ENCODE measurements at regions of chr11 and their contacts with region 1.

Region 1: DNA sequence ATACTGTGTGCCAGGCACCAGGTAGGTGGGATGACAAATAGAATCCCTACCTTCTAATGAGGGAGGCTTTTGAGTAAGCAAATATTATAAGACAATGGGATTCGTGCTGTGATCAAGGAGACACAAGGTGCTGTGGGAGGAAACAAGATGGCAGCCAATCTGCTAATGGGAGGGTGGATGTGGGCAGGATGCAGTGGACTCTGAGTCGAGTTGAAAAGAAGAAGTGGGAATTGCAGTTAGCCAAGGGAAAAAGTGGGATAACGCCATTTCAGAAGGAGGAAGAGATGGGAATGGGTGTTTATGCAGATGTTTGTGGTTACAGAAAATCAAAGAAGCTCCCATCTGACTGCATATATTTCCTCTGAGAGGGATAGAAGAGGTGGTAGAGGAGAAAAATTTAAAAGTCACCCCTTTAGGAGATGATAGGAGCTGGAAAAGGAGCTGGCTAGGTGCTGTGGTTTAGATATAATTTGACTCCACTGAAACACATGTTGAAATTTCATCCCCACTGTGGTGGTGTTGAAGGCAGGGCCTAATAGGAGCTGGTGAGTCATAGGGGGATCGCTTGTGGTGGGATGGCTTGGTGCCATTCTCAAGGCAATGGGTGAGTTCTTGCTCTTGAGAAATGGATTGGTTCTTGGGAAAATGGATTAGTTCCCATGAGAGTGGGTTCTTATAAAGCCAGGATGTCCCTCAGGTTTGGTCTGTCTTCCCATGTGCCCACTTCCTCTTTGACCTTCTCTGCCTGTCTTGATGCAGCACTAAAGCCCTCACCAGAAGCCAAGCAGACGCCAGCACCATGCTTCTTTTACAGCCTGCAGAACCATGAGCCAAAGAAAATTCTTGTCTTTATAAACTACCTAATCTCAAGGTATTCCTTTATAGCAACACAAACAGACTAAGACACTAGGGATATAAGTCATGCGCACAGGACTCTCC is 30.0 kb upstream of the POU2AF1 start:
- DNase-seq: no peak
- H3K4me3 ChIP-seq: no peak overlapping the region
- H3K27ac ChIP-seq: no peak overlapping the region
- H3K4me1 ChIP-seq: no peaks in the 10 kb centered on the region
- H3K27me3 ChIP-seq: no peaks in the 10 kb centered on the region; the same call in 1 of the 2 replicates
- CTCF ChIP-seq: no peak
- EP300 ChIP-seq: no peak
- RAD21 ChIP-seq: no peak

Region 2: GRCh38 chr11:111422494-111423249 is 13.6 kb after region 1 on chr11:
- CTCF ChIA-PET with region 1: interaction called, 26 read pairs
- POLR2A ChIA-PET with region 1: no interaction called
- DNase-seq: peak; percentile 64
- H3K4me3 ChIP-seq: peak overlapping the region in 1 of 2 experiments; percentile 26; a peak in 1 of 4 replicates
- H3K27ac ChIP-seq: no peak overlapping the region
- H3K4me1 ChIP-seq: peaks cover 0 to 6% of the 10 kb centered on the region in 2 experiments; a peak in 1 of 4 replicates
- H3K27me3 ChIP-seq: no peaks in the 10 kb centered on the region; the same call in 1 of the 2 replicates
- CTCF ChIP-seq: peak; percentile 68
- EP300 ChIP-seq: no peak
- RAD21 ChIP-seq: peak; percentile 91

Region 3: DNA sequence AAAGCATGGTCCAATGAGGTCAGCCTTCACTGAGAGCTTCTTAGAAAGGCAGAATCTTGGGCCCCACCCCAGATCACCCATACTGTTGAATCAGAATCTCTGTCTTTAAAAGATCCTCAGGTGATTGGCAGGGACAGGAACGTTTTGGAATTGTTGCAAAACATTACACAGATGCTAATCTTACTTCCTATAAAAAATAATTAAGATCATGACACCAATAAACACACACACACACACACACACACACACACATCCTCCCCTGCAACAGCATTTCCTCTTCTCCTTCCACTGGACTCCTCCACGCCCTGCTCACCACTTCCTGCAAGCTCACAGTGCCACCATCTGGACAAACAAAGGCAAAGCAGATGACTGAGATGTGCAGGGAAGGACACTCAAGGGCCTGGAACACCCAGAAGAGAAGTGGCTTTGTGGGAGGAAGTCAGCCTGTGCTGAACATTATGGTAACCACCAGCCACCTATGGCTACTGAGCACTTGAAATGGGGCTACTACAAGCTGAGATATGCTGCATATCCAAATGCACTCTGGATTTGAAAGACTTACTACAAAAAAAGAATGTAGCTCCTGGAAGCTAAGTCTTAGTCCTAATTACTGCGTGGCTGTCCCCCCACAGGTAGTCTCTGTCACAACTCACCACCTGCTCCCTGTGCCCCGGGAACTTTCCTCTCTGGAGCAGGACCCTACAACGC is 37.5 kb after region 1 on chr11:
- CTCF ChIA-PET with region 1: interaction called, 12 read pairs
- POLR2A ChIA-PET with region 1: no interaction called
- DNase-seq: peak; percentile 86
- H3K4me3 ChIP-seq: no peak overlapping the region; a peak in 1 of 4 replicates
- H3K27ac ChIP-seq: no peak overlapping the region
- H3K4me1 ChIP-seq: peaks cover 0 to 5% of the 10 kb centered on the region in 2 experiments; a peak in 1 of 4 replicates
- H3K27me3 ChIP-seq: no peaks in the 10 kb centered on the region
- CTCF ChIP-seq: peak; percentile 87
- EP300 ChIP-seq: no peak
- RAD21 ChIP-seq: peak; percentile 97

Measured in SK-N-SH (cell line).